ENCODE measurements at regions of chr3 and their contacts with region 1.

Region 1: GRCh38 chr3:133588784-133589465 is 15.4 kb downstream of the CDV3 start:
- DNase-seq: no peak
- H3K4me3 ChIP-seq: no peak overlapping the region
- H3K27ac ChIP-seq: no peak overlapping the region
- H3K4me1 ChIP-seq: no peaks in the 10 kb centered on the region
- H3K27me3 ChIP-seq: no peaks in the 10 kb centered on the region
- CTCF ChIP-seq: no peak
- EP300 ChIP-seq: no peak
- POLR2A ChIP-seq: no peak
- RAD21 ChIP-seq: no peak

Region 2: DNA sequence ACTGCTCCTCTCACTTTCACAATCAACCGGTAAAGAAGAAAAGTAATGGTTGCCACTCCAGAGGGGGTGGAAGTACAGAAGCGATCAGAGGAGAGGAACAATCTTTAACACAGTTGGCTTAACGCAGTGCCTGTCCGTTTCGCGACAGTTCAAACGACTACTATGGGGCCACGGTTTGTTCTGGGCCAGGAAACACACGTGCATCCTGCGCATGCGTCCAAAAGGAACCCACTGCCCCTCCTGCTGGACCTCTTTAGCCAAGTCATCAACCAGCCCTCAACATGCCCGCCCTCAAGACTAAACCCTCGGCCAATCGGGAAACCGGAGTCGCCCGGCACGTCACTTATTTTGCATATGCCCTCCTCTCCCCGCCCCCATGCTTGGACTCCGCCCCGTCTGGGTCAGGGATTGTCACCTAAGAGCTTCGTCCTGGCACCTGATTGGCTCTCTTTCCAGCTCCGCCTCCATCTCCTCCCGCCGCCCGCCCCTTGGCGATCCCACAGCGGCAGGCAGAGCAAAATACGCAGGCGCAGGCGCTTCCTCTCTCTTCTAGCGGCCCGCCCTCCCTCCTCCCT is 15.8 kb before region 1 on chr3:
- CTCF ChIA-PET with region 1: interaction called, 6 read pairs
- POLR2A ChIA-PET with region 1: interaction called, 13 read pairs
- DNase-seq: peak; percentile 99 to 100
- H3K4me3 ChIP-seq: peak overlapping the region; percentile 69 to 89 (median 76); a peak in 7 of 8 replicates
- H3K27ac ChIP-seq: peak overlapping the region; percentile 93
- H3K4me1 ChIP-seq: peaks cover 0 to 5% (median 2%) of the 10 kb centered on the region in 4 experiments; a peak in 3 of 7 replicates
- H3K27me3 ChIP-seq: no peaks in the 10 kb centered on the region
- CTCF ChIP-seq: peak in 2 of 3 experiments; percentile 19 to 36; a peak in 2 of 4 replicates
- EP300 ChIP-seq: no peak
- POLR2A ChIP-seq: peak in 1 of 2 experiments; percentile 89; a peak in 2 of 3 replicates
- RAD21 ChIP-seq: peak; percentile 6 to 11; a peak in 2 of 4 replicates

Region 3: GRCh38 chr3:133606342-133606741 is 17.4 kb after region 1 on chr3:
- CTCF ChIA-PET with region 1: no interaction called
- POLR2A ChIA-PET with region 1: no interaction called
- DNase-seq: no peak
- H3K4me3 ChIP-seq: no peak overlapping the region
- H3K27ac ChIP-seq: no peak overlapping the region
- H3K4me1 ChIP-seq: no peaks in the 10 kb centered on the region
- H3K27me3 ChIP-seq: no peaks in the 10 kb centered on the region
- CTCF ChIP-seq: no peak
- EP300 ChIP-seq: no peak
- POLR2A ChIP-seq: no peak
- RAD21 ChIP-seq: no peak